Activated T-helper 1 cell treated with anti-CD3 and anti-CD28 coated beads, Interleukin-12 subunit alpha, Interleukin-12 subunit beta, Interleukin-2, Interleukin-4 antibody, amounts not matched to agents 30 ng/mL and 10 ng/mL and 1 ng/mL, durations not matched to agents 14 hours and 24 hours and 36 hours (primary cell): ENCODE measurements at regions of chr3 and their contacts with region 1.

Region 1: GRCh38 chr3:184289426-184289938 is 9.6 kb upstream of the PSMD2 start:
- DNase-seq: peak; percentile 46
- H3K4me3 Mint-ChIP-seq: no peak overlapping the region
- H3K27ac Mint-ChIP-seq: no peak overlapping the region
- H3K4me1 Mint-ChIP-seq: peaks cover 7% of the 10 kb centered on the region
- H3K27me3 Mint-ChIP-seq: peaks cover 10% of the 10 kb centered on the region

Region 2: DNA sequence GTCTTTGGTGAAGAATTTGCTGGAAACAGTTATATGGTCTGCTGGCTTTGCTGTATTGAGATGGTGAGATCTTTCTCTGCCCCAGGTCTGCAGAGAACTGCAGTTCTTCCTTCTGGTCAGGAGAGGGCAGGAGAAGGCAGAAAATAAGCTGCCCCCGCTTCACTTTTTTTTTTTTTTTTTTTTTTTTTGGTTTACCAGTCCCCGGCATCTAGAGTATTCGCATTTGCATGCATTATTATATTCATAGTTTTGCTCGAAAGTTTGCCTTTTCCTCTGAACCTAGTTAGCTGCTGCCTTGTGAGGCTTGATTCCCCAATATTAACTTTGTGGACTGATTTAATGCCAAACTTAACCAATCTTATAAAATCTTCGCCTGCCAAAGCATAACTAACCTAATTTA is 394.2 kb before region 1 on chr3:
- intact Hi-C with region 1: loop called (anchors 1 kb)
- DNase-seq: no peak
- H3K4me3 Mint-ChIP-seq: no peak overlapping the region
- H3K27ac Mint-ChIP-seq: no peak overlapping the region
- H3K4me1 Mint-ChIP-seq: peaks cover 6% of the 10 kb centered on the region
- H3K27me3 Mint-ChIP-seq: peaks cover 8% of the 10 kb centered on the region

Region 3: GRCh38 chr3:184229394-184230080 is 59.9 kb before region 1 on chr3 and contains the start of gene VWA5B2:
- intact Hi-C with region 1: loop called (anchors 1 kb)
- DNase-seq: peak; percentile 54
- H3K4me3 Mint-ChIP-seq: peak within 1 kb of the TSS; percentile 49
- H3K27ac Mint-ChIP-seq: no peak within 1 kb of the TSS
- H3K4me1 Mint-ChIP-seq: peaks cover 14% of the 10 kb centered on the region
- H3K27me3 Mint-ChIP-seq: peaks cover 52% of the 10 kb centered on the region
- total RNA-seq, gene VWA5B2: not detected in 2 replicates